ENCODE measurements at regions of chr19 and their contacts with region 1.

Region 1: DNA sequence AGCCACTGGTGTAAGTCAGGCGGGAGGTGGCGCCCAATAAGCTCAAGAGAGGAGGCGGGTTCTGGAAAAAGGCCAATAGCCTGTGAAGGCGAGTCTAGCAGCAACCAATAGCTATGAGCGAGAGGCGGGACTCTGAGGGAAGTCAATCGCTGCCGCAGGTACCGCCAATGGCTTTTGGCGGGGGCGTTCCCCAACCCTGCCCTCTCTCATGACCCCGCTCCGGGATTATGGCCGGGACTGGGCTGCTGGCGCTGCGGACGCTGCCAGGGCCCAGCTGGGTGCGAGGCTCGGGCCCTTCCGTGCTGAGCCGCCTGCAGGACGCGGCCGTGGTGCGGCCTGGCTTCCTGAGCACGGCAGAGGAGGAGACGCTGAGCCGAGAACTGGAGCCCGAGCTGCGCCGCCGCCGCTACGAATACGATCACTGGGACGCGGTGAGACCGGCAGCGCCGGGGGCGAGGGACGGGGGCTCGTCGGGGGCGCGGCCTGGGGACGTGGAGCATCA is at the start of gene ALKBH7:
- DNase-seq: peak; percentile 94
- H3K4me3 Mint-ChIP-seq: peak within 1 kb of the TSS; percentile 88
- H3K27ac Mint-ChIP-seq: peak within 1 kb of the TSS; percentile 94
- H3K4me1 Mint-ChIP-seq: no peaks in the 10 kb centered on the region
- H3K27me3 Mint-ChIP-seq: no peaks in the 10 kb centered on the region
- CTCF ChIP-seq: no peak
- total RNA-seq, gene ALKBH7: 25.9 and 27.2 TPM in 2 replicates

Region 2: GRCh38 chr19:6362027-6362350 is 10.7 kb before region 1 on chr19:
- CTCF ChIA-PET with region 1: interaction called, 14 read pairs
- intact Hi-C with region 1: no loop called
- DNase-seq: no peak
- H3K4me3 Mint-ChIP-seq: peak overlapping the region; percentile 79
- H3K27ac Mint-ChIP-seq: peak overlapping the region; percentile 58
- H3K4me1 Mint-ChIP-seq: peaks cover 9% of the 10 kb centered on the region
- H3K27me3 Mint-ChIP-seq: no peaks in the 10 kb centered on the region
- CTCF ChIP-seq: no peak

Measured in Calu3 (cell line).